Lower leg skin (tissue), 4 donors: ENCODE measurements at regions of chr6 and their contacts with region 1.

Region 1: DNA sequence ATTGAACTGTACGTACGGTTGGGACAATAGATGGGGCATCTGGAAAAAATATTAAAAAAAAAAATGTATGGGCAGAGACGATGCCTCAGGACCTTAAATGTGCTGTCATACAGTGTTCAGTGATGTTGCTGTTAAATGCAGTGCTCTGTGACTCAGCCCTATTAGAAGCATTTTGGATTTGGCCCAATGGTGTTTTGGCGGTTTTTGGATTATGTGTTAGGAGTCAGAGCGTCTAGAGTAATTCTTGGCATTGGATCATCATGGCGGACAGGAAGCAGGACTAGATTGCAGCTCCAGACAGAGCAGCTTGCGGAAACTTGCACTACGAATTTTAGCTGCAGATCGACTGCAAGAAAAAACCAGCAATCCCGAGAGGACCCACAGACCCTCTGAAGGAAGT is 280.0 kb downstream of the SOX4 start:
- DNase-seq: peak in 1 of 2 donors; percentile 70
- H3K4me3 ChIP-seq: no peak overlapping the region
- CTCF ChIP-seq: no peak
- POLR2A ChIP-seq: no peak

Region 2: GRCh38 chr6:21628160-21628559 is 245.4 kb before region 1 on chr6:
- intact Hi-C with region 1: loop called (anchors 5 kb)
- DNase-seq: no peak
- H3K4me3 ChIP-seq: no peak overlapping the region
- CTCF ChIP-seq: no peak
- POLR2A ChIP-seq: no peak

Region 3: DNA sequence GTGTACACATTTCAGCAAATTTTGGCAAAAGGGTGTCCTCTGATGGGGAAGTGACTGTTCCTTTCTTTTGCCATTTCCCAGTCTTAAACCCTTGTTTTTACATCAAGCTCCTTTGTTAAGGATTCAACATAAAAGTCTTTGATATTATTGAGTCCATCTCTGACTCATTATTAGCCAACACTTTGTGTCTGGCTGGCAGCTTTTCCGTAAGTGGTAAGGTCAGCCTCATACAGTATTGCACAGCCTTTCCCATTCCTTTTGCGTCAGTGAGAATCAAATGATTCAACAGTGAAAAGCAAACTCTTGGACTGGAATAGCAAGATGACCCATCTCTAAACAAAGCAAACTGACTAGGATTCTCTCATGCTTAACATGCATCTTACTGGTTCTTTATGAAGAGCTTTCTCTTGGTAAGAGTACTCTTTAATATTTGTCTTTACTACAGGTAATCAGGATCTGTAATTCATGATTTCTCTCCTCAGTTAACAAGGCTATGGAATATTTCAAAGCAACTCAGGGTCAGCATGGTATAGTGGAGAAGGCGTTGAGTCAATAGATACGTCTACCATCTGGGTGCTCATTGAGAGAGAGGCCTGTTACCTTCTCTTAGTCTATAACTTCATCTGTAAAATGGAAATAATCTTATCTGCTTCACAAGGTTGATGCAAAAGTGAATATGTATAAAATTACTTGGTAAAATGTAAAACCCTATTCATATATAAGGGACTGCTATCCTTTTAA is 239.6 kb after region 1 on chr6:
- intact Hi-C with region 1: no loop called
- DNase-seq: peak in 1 of 2 donors; percentile 38
- H3K4me3 ChIP-seq: no peak overlapping the region
- CTCF ChIP-seq: no peak
- POLR2A ChIP-seq: no peak